ENCODE measurements at regions of chr18 and their contacts with region 1.

Region 1: GRCh38 chr18:47149457-47150028 is 757 bp downstream of the HDHD2 start:
- DNase-seq: no peak
- H3K4me3 ChIP-seq: peak overlapping the region; percentile 63 to 75 (median 67)
- H3K27ac ChIP-seq: peak overlapping the region; percentile 87 to 88 (median 88)
- H3K4me1 ChIP-seq: peaks cover 21 to 40% (median 32%) of the 10 kb centered on the region in 4 donors
- H3K27me3 ChIP-seq: no peaks in the 10 kb centered on the region
- CTCF ChIP-seq: no peak
- EP300 ChIP-seq: no peak
- POLR2A ChIP-seq: no peak

Region 2: DNA sequence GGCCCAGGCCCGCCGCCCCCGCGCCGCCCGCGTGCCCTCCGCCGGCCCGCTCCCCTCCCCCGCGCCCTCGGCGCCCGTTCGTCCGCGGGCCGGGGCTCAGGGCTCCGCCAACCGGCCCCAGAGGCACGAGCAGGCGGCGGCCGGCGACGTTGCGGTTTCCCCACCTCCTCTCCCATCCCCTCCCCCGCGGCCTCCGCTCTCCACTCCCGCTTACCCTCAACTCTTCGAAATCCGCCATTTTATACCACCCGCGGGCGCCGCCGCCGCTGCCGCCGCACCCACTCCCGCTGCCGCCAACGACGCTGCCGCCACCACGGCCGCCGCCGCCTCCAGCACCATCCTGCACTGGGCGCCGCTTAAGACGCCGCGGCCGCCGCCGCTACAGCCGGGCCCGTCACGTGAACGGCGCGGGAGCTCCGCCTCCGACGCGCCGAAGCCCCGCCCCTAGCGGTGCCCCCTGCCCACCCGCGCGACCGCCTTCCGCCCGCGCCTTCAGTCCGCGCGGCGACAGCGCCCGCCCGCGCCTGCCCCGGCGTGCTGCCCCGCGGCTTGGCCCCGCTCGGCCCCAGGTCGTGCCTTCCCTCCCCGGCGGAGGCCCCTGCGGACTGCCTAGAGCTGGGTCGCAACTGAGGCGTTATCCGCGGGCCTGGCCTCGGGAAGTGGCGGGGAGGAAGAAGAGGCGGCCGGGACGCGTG is 232.3 kb before region 1 on chr18 and contains the starts of genes KATNAL2 and PIAS2:
- intact Hi-C with region 1: loop called (anchors 10 kb)
- DNase-seq: peak; percentile 92
- H3K4me3 ChIP-seq: peak within 1 kb of the TSS; percentile 79 to 91 (median 83)
- H3K27ac ChIP-seq: peak within 1 kb of the TSS; percentile 90 to 94 (median 92)
- H3K4me1 ChIP-seq: peaks cover 27 to 46% (median 33%) of the 10 kb centered on the region in 4 donors
- H3K27me3 ChIP-seq: no peaks in the 10 kb centered on the region
- CTCF ChIP-seq: peak in 1 of 3 experiments; percentile 7
- EP300 ChIP-seq: no peak
- POLR2A ChIP-seq: peak; percentile 18
- total RNA-seq, gene KATNAL2: 0.50 to 5.0 (median 4.3) TPM
- total RNA-seq, gene PIAS2: 18.1 to 26.9 (median 25.4) TPM

Region 3: DNA sequence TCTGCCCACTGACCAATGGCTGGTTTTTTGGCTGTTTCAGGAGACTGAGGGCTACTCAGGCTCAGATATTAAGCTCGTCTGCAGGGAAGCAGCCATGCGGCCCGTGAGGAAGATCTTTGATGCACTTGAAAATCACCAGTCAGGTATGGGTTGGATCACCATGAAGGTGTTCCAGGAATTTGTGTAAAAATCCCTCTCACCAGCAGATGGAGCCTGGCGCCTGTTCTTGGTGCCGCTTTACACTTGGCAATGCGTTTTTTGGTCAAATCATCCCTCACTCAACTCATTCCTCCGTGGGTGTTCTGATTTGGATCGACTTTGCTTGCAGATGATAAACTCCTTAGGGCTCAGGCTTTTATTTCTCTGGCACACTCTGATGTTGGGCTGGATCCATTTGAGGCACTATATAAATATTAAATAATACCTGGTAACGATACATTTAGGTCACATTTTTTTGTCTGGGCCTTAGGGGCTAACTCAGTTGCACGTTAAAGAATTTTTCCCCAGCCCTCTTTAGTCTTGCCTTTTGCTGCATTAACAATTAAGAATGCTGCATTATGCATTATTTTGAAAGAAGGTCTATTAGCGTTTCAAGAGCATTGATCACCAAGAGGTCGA is 49.2 kb before region 1 on chr18:
- intact Hi-C with region 1: no loop called
- DNase-seq: no peak
- H3K4me3 ChIP-seq: no peak overlapping the region
- H3K27ac ChIP-seq: no peak overlapping the region
- H3K4me1 ChIP-seq: peaks cover 0 to 8% (median 1%) of the 10 kb centered on the region in 4 donors
- H3K27me3 ChIP-seq: no peaks in the 10 kb centered on the region
- CTCF ChIP-seq: peak; percentile 70 to 76 (median 71)
- EP300 ChIP-seq: no peak
- POLR2A ChIP-seq: no peak

Region 4: GRCh38 chr18:47235096-47235495 is 85.6 kb after region 1 on chr18:
- intact Hi-C with region 1: no loop called
- DNase-seq: no peak
- H3K4me3 ChIP-seq: no peak overlapping the region
- H3K27ac ChIP-seq: no peak overlapping the region
- H3K4me1 ChIP-seq: no peaks in the 10 kb centered on the region
- H3K27me3 ChIP-seq: peaks cover 0 to 64% (median 0%) of the 10 kb centered on the region in 4 donors
- CTCF ChIP-seq: no peak
- EP300 ChIP-seq: no peak
- POLR2A ChIP-seq: no peak